Cardiac septum (tissue), 1 donor: ENCODE measurements at regions of chr1 and their contacts with region 1.

Region 1: DNA sequence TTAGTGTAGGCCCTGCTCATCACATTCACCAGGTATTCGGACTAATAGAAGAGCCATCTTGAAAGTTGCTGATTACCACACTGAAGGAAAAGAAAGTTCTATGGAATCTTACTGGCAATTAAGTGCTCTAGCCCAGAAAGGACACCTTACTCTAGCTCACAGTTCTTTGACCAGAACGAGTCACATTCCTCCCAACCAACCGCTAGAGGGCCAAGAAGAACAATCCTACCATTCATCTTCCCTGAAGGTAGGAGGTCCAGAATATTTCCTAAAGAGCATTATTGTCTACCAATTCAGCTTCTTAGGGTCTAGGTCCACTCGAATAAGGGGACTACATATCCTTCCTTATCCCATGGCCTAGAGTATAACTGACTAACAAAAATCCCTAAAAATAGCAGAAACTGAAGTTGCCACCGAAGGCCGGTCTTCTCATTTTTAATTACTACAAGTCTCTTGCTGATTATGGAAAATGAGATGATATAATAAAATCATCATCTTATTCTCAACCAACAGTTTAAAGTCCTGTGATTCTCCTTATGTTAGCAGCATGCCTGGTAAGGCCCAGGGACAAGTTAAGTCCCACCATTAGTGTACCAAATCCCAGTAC is 2.7 kb upstream of the FMO1 start:
- DNase-seq: no peak

Region 2: DNA sequence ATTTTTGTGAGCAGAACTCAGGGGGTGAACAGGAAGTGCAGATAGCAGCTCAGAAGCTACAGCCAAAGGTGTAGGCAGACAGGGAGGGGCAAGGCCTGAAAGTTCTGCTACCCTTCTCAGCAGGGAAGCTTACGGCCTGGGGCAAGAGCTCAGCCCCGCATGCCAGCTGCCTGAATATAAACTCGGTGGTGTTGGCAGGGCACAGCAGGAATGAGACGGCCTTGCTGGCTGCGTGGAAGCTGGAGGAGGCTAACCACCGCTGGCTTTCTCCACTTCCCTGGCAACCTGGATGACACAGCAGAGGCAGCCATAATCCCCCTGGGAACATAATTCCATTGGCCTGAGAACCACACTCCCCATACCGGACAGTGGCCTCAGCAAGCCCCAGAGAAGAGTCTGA is 157.8 kb after region 1 on chr1:
- intact Hi-C with region 1: loop called (anchors 10 kb)
- DNase-seq: no peak